Transverse colon (tissue), 4 donors: ENCODE measurements at regions of chr2 and their contacts with region 1.

Region 1: GRCh38 chr2:137117386-137117785 is 352.0 kb downstream of the THSD7B start:
- DNase-seq: no peak
- H3K4me3 ChIP-seq: no peak overlapping the region
- H3K27ac ChIP-seq: no peak overlapping the region
- H3K4me1 ChIP-seq: no peaks in the 10 kb centered on the region
- H3K27me3 ChIP-seq: no peaks in the 10 kb centered on the region
- CTCF ChIP-seq: no peak
- EP300 ChIP-seq: no peak
- POLR2A ChIP-seq: no peak

Region 2: GRCh38 chr2:136693966-136694365 is 423.4 kb before region 1 on chr2:
- in situ Hi-C with region 1: no loop called
- intact Hi-C with region 1: no loop called
- DNase-seq: no peak
- H3K4me3 ChIP-seq: no peak overlapping the region
- H3K27ac ChIP-seq: no peak overlapping the region
- H3K4me1 ChIP-seq: no peaks in the 10 kb centered on the region
- H3K27me3 ChIP-seq: no peaks in the 10 kb centered on the region
- CTCF ChIP-seq: no peak
- EP300 ChIP-seq: no peak
- POLR2A ChIP-seq: no peak

Region 3: DNA sequence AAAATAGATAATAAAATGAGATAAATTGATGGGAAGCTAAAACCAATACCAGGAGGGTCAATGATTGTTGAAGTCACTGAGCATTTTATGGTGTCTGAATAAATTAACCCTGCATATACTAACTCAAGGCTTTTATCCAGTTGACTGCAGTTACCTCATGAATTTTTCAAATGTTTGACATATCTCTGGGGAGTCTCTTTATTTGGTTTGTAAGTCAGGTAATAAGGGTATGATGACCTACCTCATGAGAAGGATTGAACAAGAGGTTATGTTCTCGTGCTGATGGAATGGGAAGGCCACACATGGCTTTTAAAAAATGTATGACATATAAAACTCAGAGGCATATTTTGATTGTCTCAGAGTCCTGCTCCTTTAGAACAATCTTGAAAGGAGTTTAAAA is 114.5 kb before region 1 on chr2:
- in situ Hi-C with region 1: no loop called
- intact Hi-C with region 1: no loop called
- DNase-seq: no peak
- H3K4me3 ChIP-seq: no peak overlapping the region
- H3K27ac ChIP-seq: no peak overlapping the region
- H3K4me1 ChIP-seq: no peaks in the 10 kb centered on the region
- H3K27me3 ChIP-seq: no peaks in the 10 kb centered on the region
- CTCF ChIP-seq: no peak
- EP300 ChIP-seq: no peak
- POLR2A ChIP-seq: no peak

Region 4: GRCh38 chr2:138730497-138731030 is 1613.2 kb after region 1 on chr2:
- in situ Hi-C with region 1: no loop called
- intact Hi-C with region 1: loop called (anchors 10 kb)
- DNase-seq: no peak
- H3K4me3 ChIP-seq: no peak overlapping the region
- H3K27ac ChIP-seq: no peak overlapping the region
- H3K4me1 ChIP-seq: no peaks in the 10 kb centered on the region
- H3K27me3 ChIP-seq: no peaks in the 10 kb centered on the region
- CTCF ChIP-seq: no peak
- EP300 ChIP-seq: no peak
- POLR2A ChIP-seq: no peak